A673 (cell line): ENCODE measurements at regions of chr1 and their contacts with region 1.

Region 1: GRCh38 chr1:106746448-106747085 is 309.9 kb upstream of the PRMT6 start:
- DNase-seq: peak; percentile 97
- H3K4me3 ChIP-seq: no peak overlapping the region
- H3K27ac ChIP-seq: peak overlapping the region; percentile 55
- H3K4me1 ChIP-seq: peaks cover 33% of the 10 kb centered on the region
- H3K27me3 ChIP-seq: no peaks in the 10 kb centered on the region
- CTCF ChIP-seq: no peak

Region 2: DNA sequence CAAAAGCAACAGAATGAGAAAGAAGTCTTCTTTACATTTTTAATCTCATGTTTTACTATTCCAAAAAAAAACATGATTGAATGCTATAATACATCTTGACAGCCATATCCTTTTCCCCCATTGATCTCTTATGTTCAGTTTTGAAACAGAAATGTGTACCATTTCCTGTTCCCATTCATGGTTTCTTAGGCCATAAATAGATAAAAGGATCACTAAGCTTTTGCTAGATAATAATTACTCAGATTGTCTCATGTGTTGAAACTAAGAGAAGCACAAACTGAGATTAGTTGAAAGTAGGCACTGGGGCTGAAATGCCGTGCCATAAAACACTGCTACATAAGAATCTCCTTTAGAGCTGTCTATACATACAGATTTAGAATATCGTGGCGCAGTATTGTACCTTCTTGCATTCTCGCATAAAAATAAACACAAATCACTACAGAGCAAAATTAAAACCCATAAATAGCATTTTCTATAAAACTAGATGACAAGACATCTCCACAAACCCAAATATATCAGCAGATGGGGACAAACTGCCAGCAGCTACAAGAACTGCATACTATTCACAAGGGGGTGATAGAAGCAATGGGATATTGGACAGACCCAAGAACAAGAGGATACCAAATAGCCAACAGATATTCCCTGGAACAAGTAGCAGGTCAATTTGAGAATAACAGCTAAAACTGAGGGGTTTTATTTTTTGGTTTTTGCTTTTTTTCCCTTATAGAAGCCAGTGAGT is 95.4 kb before region 1 on chr1:
- CTCF ChIA-PET with region 1: no interaction called
- POLR2A ChIA-PET with region 1: no interaction called
- intact Hi-C with region 1: loop called (anchors 1 kb)
- DNase-seq: peak; percentile 88
- H3K4me3 ChIP-seq: peak overlapping the region; percentile 12
- H3K27ac ChIP-seq: peak overlapping the region; percentile 53
- H3K4me1 ChIP-seq: peaks cover 34% of the 10 kb centered on the region
- H3K27me3 ChIP-seq: no peaks in the 10 kb centered on the region
- CTCF ChIP-seq: peak; percentile 55; the same call in 1 of the 2 replicates

Region 3: DNA sequence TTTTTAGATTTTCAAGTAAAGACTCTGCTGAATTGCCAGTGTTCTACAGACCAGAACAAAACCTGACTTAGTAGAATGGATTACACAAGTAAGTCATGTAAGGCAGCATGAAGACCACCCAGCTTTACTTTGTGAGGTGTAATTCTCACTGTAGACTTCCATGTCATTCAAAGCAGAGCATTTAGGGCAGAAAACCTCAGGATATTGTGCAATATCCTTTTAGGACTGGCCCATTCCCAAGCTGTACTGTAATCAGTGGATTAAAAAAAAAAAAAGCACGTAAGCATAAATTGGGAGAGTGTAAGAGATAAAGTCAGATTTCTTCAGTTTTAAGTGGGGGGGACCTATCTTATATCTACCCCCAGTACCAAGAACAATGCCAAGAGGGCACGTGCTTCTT is 70.5 kb before region 1 on chr1:
- CTCF ChIA-PET with region 1: no interaction called
- POLR2A ChIA-PET with region 1: no interaction called
- intact Hi-C with region 1: loop called (anchors 2 kb)
- DNase-seq: peak; percentile 91
- H3K4me3 ChIP-seq: no peak overlapping the region
- H3K27ac ChIP-seq: peak overlapping the region; percentile 55
- H3K4me1 ChIP-seq: peaks cover 44% of the 10 kb centered on the region
- H3K27me3 ChIP-seq: no peaks in the 10 kb centered on the region
- CTCF ChIP-seq: no peak

Region 4: GRCh38 chr1:106836708-106837107 is 90.1 kb after region 1 on chr1:
- CTCF ChIA-PET with region 1: no interaction called
- POLR2A ChIA-PET with region 1: no interaction called
- intact Hi-C with region 1: no loop called
- DNase-seq: no peak
- H3K4me3 ChIP-seq: no peak overlapping the region
- H3K27ac ChIP-seq: no peak overlapping the region
- H3K4me1 ChIP-seq: no peaks in the 10 kb centered on the region
- H3K27me3 ChIP-seq: no peaks in the 10 kb centered on the region
- CTCF ChIP-seq: no peak